Activated CD4-positive, alpha-beta T cell treated with anti-CD3 and anti-CD28 coated beads, Interleukin-2, amount 10 ng/mL, durations not matched to agents 7 days and 5 days (primary cell): ENCODE measurements at regions of chr2 and their contacts with region 1.

Region 1: DNA sequence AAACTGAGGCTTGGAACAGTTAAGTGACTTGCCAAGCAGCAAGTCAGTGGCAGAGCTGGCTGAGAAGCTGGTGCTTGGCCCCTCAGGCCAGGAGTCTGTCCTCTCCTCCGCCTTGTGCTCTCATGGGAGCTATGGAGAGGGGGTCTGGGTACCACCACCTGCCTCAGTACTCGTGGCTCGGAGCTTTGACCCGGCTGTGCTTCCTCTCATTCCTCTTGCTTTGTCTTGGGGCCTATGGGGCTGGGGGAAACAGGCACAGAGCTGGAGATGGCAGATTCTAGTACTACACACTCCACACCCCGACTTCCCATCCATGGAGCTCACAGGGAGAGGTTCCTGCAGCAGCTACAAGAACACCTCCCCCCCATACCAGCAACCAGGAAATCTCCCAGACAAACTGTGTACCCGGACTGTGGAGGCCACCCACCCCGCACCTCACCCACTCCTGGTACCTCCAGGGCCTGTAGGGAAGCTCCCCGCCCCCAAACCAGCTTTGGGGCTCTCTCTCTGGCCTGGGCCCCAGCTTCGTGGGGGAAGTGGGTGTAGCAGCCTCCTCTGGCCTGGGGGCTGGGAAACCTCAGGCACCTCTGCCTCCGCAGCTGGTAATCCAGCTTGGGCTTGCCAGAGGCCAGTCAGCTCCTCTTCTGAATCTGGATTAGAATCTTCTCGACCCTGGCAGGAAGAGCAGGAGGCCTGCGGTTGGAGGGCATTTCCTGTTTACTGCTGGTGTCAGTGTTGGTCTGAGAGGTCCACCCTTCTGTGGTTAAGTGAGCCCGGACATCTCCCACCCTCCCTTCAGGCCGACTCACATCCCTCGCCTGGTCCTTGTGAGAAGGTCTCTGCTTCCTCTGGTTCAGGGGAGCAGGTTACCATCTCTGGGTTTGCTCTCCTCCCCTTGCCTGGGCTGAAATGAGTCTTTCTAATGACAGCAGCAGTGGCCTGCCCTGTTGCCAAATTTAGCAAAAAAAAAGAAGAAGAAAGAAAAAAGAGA is 22.3 kb upstream of the RHOB start:
- DNase-seq: peak; percentile 20
- H3K4me3 Mint-ChIP-seq: peak overlapping the region; percentile 17
- H3K27ac Mint-ChIP-seq: peak overlapping the region; percentile 90
- H3K4me1 Mint-ChIP-seq: peaks cover 28% of the 10 kb centered on the region
- H3K27me3 Mint-ChIP-seq: no peaks in the 10 kb centered on the region

Region 2: GRCh38 chr2:18777250-18777812 is 1647.3 kb before region 1 on chr2:
- CTCF ChIA-PET with region 1: no interaction called
- POLR2A ChIA-PET with region 1: no interaction called
- DNase-seq: no peak
- H3K4me3 Mint-ChIP-seq: no peak overlapping the region
- H3K27ac Mint-ChIP-seq: no peak overlapping the region
- H3K4me1 Mint-ChIP-seq: no peaks in the 10 kb centered on the region
- H3K27me3 Mint-ChIP-seq: no peaks in the 10 kb centered on the region

Region 3: GRCh38 chr2:20411361-20411894 is 13.2 kb before region 1 on chr2:
- CTCF ChIA-PET with region 1: interaction called, 37 read pairs
- POLR2A ChIA-PET with region 1: no interaction called
- DNase-seq: peak; percentile 77
- H3K4me3 Mint-ChIP-seq: no peak overlapping the region
- H3K27ac Mint-ChIP-seq: no peak overlapping the region
- H3K4me1 Mint-ChIP-seq: peaks cover 1% of the 10 kb centered on the region
- H3K27me3 Mint-ChIP-seq: peaks cover 36% of the 10 kb centered on the region